ENCODE measurements at regions of chr1 and their contacts with region 1.

Region 1: GRCh38 chr1:151254217-151255213 is at the start of gene PSMD4:
- DNase-seq: peak; percentile 96
- ATAC-seq: peak; percentile 98 to 99 (median 99)
- H3K4me3 ChIP-seq: peak within 1 kb of the TSS; percentile 63 to 97 (median 88)
- H3K27ac ChIP-seq: peak within 1 kb of the TSS; percentile 73 to 95 (median 90)
- H3K4me1 ChIP-seq: peaks cover 0 to 26% (median 9%) of the 10 kb centered on the region in 12 donors
- H3K27me3 ChIP-seq: no peaks in the 10 kb centered on the region
- CTCF ChIP-seq: no peak
- POLR2A ChIP-seq: peak in 1 of 2 donors; percentile 86
- total RNA-seq, gene PSMD4: 127 to 181 (median 138) TPM

Region 2: GRCh38 chr1:151098126-151098525 is 156.4 kb before region 1 on chr1:
- intact Hi-C with region 1: loop called in 3 of 10 experiments (anchors 5 to 10 kb)
- DNase-seq: no peak
- ATAC-seq: no peak
- H3K4me3 ChIP-seq: no peak overlapping the region
- H3K27ac ChIP-seq: no peak overlapping the region
- H3K4me1 ChIP-seq: no peaks in the 10 kb centered on the region
- H3K27me3 ChIP-seq: no peaks in the 10 kb centered on the region
- CTCF ChIP-seq: no peak
- POLR2A ChIP-seq: no peak

Region 3: GRCh38 chr1:151106894-151107293 is 147.6 kb before region 1 on chr1:
- intact Hi-C with region 1: loop called in 1 of 10 experiments (anchors 5 kb)
- DNase-seq: no peak
- ATAC-seq: no peak
- H3K4me3 ChIP-seq: no peak overlapping the region
- H3K27ac ChIP-seq: no peak overlapping the region
- H3K4me1 ChIP-seq: no peaks in the 10 kb centered on the region
- H3K27me3 ChIP-seq: no peaks in the 10 kb centered on the region
- CTCF ChIP-seq: no peak
- POLR2A ChIP-seq: no peak

Region 4: DNA sequence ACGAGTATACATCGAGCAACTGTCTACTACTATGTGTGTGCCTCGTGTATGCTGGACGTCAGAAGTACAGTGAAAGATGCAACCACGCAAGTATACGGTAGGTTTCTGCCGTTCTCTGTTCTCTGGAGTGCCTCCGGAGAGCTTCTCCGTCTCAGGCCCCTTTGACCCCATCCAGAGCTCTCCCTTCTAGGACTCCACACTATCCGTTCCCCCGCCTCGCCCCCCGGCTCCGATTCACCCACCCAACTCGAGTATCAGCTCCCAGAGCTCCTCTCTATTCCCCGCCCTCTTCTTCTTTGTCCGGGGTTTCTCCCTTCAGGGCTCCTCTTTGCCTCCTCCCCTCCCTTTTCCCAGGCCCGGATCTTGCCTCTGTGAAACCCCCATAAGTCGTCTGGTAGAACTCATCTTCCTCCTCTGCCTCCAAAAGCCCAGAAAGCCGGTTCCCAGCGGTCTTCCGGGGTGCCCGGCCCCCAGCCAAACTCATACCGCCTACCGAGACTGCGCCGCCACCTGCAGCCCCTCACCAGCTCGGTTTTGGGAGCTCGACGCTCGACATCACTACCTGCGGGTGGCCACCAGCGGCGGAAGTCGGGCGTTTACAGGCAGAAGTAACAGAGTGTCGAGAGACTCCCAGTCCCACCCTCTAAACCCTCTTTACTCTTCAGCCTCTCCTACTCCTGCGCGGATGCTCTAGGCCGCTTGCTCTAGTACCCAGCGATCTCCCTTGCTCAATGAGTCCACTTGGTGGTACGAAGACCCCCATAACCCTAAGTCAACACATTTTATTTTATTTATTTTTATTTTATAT is 64.7 kb before region 1 on chr1 and contains the start of gene VPS72:
- intact Hi-C with region 1: loop called in 4 of 10 experiments (anchors 5 kb)
- DNase-seq: peak; percentile 86 to 90 (median 88)
- ATAC-seq: peak; percentile 93 to 98 (median 98)
- H3K4me3 ChIP-seq: peak within 1 kb of the TSS; percentile 54 to 95 (median 82)
- H3K27ac ChIP-seq: peak within 1 kb of the TSS; percentile 45 to 90 (median 80)
- H3K4me1 ChIP-seq: peaks cover 0 to 32% (median 18%) of the 10 kb centered on the region in 12 donors
- H3K27me3 ChIP-seq: no peaks in the 10 kb centered on the region
- CTCF ChIP-seq: peak in 3 of 12 donors; percentile 2 to 24 (median 7)
- POLR2A ChIP-seq: peak in 1 of 2 donors; percentile 57
- total RNA-seq, gene VPS72: 29.6 to 49.1 (median 38.1) TPM

Region 5: DNA sequence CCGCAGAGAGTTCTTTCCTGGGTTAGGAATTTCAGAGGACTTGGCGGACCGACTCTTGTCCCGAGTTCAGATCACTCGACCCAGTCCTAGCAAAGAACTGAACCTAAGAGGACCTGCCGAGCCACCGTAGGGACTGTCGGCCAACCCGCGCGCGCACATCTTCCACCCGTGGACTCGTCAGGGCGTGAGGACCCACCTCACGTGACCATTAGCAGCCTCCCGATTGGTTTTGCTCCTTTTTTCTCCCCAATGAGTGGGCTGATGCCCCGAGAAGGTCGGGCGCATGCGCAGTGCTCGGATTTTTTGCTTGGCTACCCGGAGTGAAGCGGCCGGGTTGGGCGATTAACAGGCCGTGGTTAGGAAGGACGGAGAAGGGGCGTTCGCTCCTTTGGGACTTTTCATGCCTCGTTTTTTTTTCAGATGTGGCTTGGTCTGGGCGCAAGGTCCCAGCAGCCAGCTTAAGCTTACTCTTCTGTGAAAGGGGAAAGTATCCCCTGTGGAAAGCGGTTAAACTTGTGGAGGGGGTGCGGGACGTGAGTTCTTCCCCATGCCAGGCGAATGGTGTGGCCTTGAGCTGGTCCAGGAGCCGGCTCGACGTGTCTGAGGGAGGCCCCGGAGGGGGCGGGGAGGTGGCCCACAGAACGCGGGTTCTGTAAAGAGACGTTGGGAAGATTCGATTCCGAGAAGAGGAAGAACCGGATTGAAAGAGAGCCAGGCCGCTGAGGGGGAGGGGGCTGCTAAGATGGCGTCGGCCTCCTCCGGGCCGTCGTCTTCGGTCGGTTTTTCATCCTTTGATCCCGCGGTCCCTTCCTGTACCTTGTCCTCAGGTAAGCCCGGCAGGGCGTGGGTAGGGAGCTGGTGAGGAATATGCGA is 56.0 kb before region 1 on chr1 and contains the start of gene PIP5K1A:
- intact Hi-C with region 1: loop called in 9 of 10 experiments (anchors 1 to 5 kb)
- DNase-seq: peak; percentile 99 to 100 (median 99)
- ATAC-seq: peak; percentile 94 to 97 (median 96)
- H3K4me3 ChIP-seq: peak within 1 kb of the TSS; percentile 58 to 90 (median 78)
- H3K27ac ChIP-seq: peak within 1 kb of the TSS; percentile 33 to 94 (median 90)
- H3K4me1 ChIP-seq: peaks cover 0 to 49% (median 36%) of the 10 kb centered on the region in 12 donors
- H3K27me3 ChIP-seq: no peaks in the 10 kb centered on the region
- CTCF ChIP-seq: no peak
- POLR2A ChIP-seq: peak in 1 of 2 donors; percentile 68
- total RNA-seq, gene PIP5K1A: 28.1 to 48.8 (median 37.0) TPM

Region 6: DNA sequence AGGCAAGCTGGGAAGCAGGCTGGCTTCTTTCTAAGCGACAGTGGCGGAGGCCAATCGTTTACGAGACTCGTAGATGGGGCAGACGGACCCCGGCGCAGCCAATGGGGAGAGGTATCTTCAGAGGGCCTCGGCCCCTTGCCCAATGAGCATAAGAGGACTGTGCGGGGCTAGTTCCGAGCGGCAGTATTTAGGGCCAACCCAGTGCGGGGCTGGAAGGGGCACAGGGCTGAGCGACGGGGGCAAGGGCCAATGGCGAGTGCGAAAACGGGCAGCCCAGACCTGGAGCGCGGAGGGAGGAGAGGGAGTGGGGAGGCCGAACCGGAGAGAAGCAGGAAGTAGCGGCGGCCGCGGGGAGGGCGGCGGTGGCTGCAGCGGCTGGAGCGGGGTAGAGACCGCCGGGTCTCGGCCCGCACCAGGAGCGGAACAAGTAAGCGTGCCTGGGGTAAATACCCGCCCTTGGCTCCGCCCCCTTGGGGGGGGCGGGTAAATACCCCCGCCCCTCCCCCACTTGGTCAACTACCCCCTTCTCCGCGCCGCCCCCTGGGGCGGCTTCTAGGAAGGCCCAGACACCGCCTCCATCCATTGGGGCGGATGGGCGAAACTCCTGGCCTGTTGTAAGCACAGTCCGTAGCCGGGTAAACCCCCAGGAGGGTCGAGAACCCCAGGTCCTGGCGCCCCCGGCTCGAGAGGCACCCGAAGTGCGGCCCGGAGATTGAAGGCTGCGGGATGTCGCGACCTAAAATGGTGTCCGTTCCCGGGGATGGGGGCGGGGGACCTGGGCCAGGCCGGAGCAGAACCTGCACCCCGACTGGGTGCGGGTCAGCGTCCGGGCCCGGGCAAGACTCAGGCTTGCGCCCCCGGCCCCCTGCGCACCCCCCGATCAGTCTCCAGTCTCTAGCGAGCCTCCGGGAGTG is 27.7 kb after region 1 on chr1 and contains the start of gene ZNF687:
- intact Hi-C with region 1: loop called in 1 of 10 experiments (anchors 1 kb)
- DNase-seq: peak; percentile 100
- ATAC-seq: peak; percentile 91 to 98 (median 94)
- H3K4me3 ChIP-seq: peak within 1 kb of the TSS; percentile 71 to 98 (median 90)
- H3K27ac ChIP-seq: peak within 1 kb of the TSS; percentile 92 to 100 (median 98)
- H3K4me1 ChIP-seq: peaks cover 0 to 37% (median 14%) of the 10 kb centered on the region in 12 donors
- H3K27me3 ChIP-seq: no peaks in the 10 kb centered on the region
- CTCF ChIP-seq: no peak
- POLR2A ChIP-seq: peak in 1 of 2 donors; percentile 78
- total RNA-seq, gene ZNF687: 10.9 to 30.3 (median 14.3) TPM

Measured in heart left ventricle (tissue), 16 donors.